IMR-90 (cell line): ENCODE measurements at regions of chr5 and their contacts with region 1.

Region 1: DNA sequence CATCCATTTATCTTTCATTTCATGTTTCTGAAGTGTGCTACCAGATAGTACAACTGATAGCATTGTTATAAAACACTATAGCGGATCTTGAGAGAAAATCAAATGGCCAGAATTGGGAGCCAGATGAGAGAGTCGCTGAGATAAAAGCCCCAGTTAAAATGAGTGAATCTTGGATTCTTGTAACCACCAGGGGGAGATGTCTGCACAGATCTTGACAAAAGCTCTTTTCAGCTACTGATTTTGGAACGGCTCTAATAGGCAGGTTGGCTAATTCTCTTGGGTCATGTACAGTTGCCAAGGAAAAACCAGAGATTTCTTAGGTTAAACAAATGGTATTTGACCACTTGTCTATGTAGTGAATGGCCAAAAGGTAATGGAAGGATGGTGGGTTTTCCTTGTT is 21.7 kb downstream of the F2RL2 start:
- DNase-seq: peak; percentile 80
- ATAC-seq: peak; percentile 75
- H3K4me3 ChIP-seq: no peak overlapping the region
- H3K27ac ChIP-seq: no peak overlapping the region
- H3K4me1 ChIP-seq: peaks cover 2% of the 10 kb centered on the region; the same call in 1 of the 2 replicates
- H3K27me3 ChIP-seq: no peaks in the 10 kb centered on the region
- CTCF ChIP-seq: peak; percentile 85
- POLR2A ChIP-seq: no peak
- RAD21 ChIP-seq: peak; percentile 90

Region 2: GRCh38 chr5:76199336-76200318 is 401.8 kb before region 1 on chr5:
- CTCF ChIA-PET with region 1: no interaction called
- POLR2A ChIA-PET with region 1: no interaction called
- dilution Hi-C with region 1: no loop called
- in situ Hi-C with region 1: no loop called
- intact Hi-C with region 1: no loop called
- DNase-seq: no peak
- ATAC-seq: no peak
- H3K4me3 ChIP-seq: no peak overlapping the region
- H3K27ac ChIP-seq: no peak overlapping the region
- H3K4me1 ChIP-seq: no peaks in the 10 kb centered on the region
- H3K27me3 ChIP-seq: no peaks in the 10 kb centered on the region
- CTCF ChIP-seq: no peak
- POLR2A ChIP-seq: no peak
- RAD21 ChIP-seq: no peak

Region 3: GRCh38 chr5:76256116-76256889 is 345.2 kb before region 1 on chr5:
- CTCF ChIA-PET with region 1: no interaction called
- POLR2A ChIA-PET with region 1: no interaction called
- dilution Hi-C with region 1: no loop called
- in situ Hi-C with region 1: no loop called
- intact Hi-C with region 1: no loop called
- DNase-seq: peak; percentile 66
- ATAC-seq: peak; percentile 100
- H3K4me3 ChIP-seq: no peak overlapping the region
- H3K27ac ChIP-seq: no peak overlapping the region
- H3K4me1 ChIP-seq: no peaks in the 10 kb centered on the region
- H3K27me3 ChIP-seq: peaks cover 2% of the 10 kb centered on the region; the same call in 1 of the 2 replicates
- CTCF ChIP-seq: peak; percentile 65
- POLR2A ChIP-seq: no peak
- RAD21 ChIP-seq: peak; percentile 74

Region 4: DNA sequence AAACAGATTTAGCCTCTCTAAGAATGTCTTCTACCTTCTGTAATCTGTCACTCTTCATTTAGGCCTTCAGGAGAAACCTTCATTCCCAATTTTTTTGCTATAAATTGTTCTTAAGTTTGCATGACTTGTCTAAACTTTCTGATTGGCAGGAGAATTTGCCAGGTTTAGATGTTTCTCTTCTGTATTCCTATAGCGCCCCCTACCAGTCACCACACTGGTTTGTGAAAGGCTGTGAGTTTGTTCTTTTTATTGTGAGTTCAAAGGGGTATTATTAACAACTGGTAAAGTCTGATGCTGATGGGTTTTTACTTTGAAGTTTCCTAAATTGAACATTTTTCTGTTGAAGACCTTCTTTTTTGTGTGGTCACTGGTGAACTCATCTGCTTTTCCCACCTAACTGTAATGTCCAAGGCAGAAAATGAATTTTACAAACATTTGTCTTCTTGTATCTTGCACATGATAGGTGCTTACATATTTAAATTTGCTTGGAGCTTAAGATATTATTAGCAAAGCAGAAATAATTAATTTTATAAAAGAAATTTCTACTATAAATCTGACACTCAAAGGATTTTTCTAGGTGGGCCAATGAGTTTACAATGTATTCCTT is 40.1 kb after region 1 on chr5:
- CTCF ChIA-PET with region 1: interaction called, 3 read pairs
- POLR2A ChIA-PET with region 1: no interaction called
- dilution Hi-C with region 1: no loop called
- in situ Hi-C with region 1: no loop called
- intact Hi-C with region 1: loop called (anchors 1 kb)
- DNase-seq: peak; percentile 79
- ATAC-seq: peak; percentile 69
- H3K4me3 ChIP-seq: no peak overlapping the region
- H3K27ac ChIP-seq: no peak overlapping the region
- H3K4me1 ChIP-seq: peaks cover 10% of the 10 kb centered on the region
- H3K27me3 ChIP-seq: no peaks in the 10 kb centered on the region
- CTCF ChIP-seq: peak; percentile 94
- POLR2A ChIP-seq: no peak
- RAD21 ChIP-seq: peak; percentile 93

Region 5: DNA sequence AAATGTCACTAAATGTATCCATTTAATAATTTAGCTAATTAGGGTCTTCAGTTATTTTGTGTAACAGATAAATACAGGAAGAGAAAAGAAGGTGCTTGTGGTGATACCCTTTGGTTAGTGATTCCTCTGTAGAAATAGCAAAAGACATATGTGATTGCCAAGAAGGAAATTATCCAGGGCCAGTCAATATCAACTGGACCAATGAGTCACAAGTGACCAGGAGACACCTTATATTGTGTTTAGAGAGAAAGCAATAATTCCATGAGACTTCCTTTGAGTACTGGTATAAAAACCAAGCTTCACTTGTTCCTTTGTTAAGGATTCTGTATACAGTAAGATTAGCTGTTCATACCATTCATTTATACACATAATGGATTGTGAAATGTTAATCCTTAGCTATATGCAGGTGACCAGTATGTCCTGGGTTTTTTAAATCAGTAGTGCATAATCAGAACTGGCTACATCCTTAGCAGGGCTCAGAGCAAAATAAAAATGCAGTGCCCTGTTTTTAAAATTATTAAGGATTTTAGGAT is 102.7 kb after region 1 on chr5:
- CTCF ChIA-PET with region 1: no interaction called
- POLR2A ChIA-PET with region 1: no interaction called
- dilution Hi-C with region 1: no loop called
- in situ Hi-C with region 1: no loop called
- intact Hi-C with region 1: no loop called
- DNase-seq: peak; percentile 51
- ATAC-seq: peak; percentile 15
- H3K4me3 ChIP-seq: no peak overlapping the region
- H3K27ac ChIP-seq: no peak overlapping the region
- H3K4me1 ChIP-seq: peaks cover 17% of the 10 kb centered on the region
- H3K27me3 ChIP-seq: no peaks in the 10 kb centered on the region
- CTCF ChIP-seq: no peak
- POLR2A ChIP-seq: no peak
- RAD21 ChIP-seq: no peak

Region 6: GRCh38 chr5:76859591-76860247 is 258.2 kb after region 1 on chr5:
- CTCF ChIA-PET with region 1: no interaction called
- POLR2A ChIA-PET with region 1: no interaction called
- dilution Hi-C with region 1: no loop called
- in situ Hi-C with region 1: no loop called
- intact Hi-C with region 1: loop called (anchors 5 kb)
- DNase-seq: no peak
- ATAC-seq: no peak
- H3K4me3 ChIP-seq: no peak overlapping the region
- H3K27ac ChIP-seq: no peak overlapping the region
- H3K4me1 ChIP-seq: peaks cover 3% of the 10 kb centered on the region
- H3K27me3 ChIP-seq: no peaks in the 10 kb centered on the region
- CTCF ChIP-seq: no peak
- POLR2A ChIP-seq: no peak
- RAD21 ChIP-seq: no peak

Region 7: GRCh38 chr5:77015938-77016569 is 414.6 kb after region 1 on chr5:
- CTCF ChIA-PET with region 1: no interaction called
- POLR2A ChIA-PET with region 1: no interaction called
- dilution Hi-C with region 1: no loop called
- in situ Hi-C with region 1: loop called (anchors 10 kb)
- intact Hi-C with region 1: loop called (anchors 1 kb)
- DNase-seq: peak; percentile 69
- ATAC-seq: peak; percentile 64
- H3K4me3 ChIP-seq: no peak overlapping the region
- H3K27ac ChIP-seq: no peak overlapping the region
- H3K4me1 ChIP-seq: no peaks in the 10 kb centered on the region
- H3K27me3 ChIP-seq: peaks cover 7% of the 10 kb centered on the region
- CTCF ChIP-seq: peak; percentile 43
- POLR2A ChIP-seq: no peak
- RAD21 ChIP-seq: peak; percentile 53